Left lung (tissue), 14 donors: ENCODE measurements at regions of chr5 and their contacts with region 1.

Region 1: DNA sequence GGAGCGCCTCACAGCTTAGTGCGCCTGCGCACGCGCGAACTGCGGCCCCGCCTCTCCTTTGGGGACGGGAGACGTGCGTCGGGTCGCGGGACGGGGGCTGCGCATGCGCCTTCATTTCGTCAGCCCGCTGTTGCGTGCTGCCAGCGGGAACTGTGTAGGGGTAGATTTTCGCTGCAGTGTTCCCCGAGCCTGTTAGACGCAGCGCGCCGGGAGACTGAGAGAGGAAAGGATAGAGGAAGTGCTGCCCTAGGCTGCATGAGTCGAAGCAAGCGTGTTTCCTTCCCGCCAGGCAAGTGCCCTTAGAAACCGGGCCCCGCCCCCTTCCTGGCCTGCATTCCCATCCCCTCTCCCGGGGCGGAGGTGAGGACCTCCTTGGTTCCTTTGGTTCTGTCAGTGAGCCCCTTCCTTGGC is 12.3 kb downstream of the ITGA1 start:
- DNase-seq: peak; percentile 94 to 99 (median 98)
- ATAC-seq: peak; percentile 90
- H3K4me3 ChIP-seq: peak overlapping the region; percentile 56 to 80
- H3K27ac ChIP-seq: peak overlapping the region; percentile 96 to 97
- H3K4me1 ChIP-seq: peaks cover 20 to 67% of the 10 kb centered on the region in 2 donors
- H3K27me3 ChIP-seq: no peaks in the 10 kb centered on the region
- CTCF ChIP-seq: no peak

Region 2: GRCh38 chr5:52632281-52632680 is 167.7 kb before region 1 on chr5:
- intact Hi-C with region 1: no loop called
- DNase-seq: no peak
- ATAC-seq: no peak
- H3K4me3 ChIP-seq: no peak overlapping the region
- H3K27ac ChIP-seq: no peak overlapping the region
- H3K4me1 ChIP-seq: no peaks in the 10 kb centered on the region
- H3K27me3 ChIP-seq: no peaks in the 10 kb centered on the region
- CTCF ChIP-seq: no peak

Region 3: DNA sequence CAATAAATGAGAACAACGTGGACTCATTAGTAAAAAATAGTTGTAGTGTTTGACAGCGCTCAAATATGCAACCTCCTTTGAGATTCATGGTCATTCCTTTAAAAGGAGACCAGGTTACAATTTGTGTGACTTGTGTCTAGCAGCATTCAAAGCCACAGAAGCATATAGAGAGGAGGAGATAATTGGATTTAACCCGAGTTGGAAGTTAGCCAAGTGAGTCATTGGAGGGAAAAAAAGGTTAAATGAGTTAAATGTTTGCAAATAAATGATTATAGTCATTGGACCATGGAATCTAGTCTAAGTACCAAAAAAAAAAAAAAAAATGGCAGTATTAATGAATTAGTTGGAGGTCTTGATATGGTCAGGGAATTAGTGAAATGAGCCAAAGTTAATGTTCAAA is 78.7 kb after region 1 on chr5:
- intact Hi-C with region 1: no loop called
- DNase-seq: no peak
- ATAC-seq: no peak
- H3K4me3 ChIP-seq: no peak overlapping the region
- H3K27ac ChIP-seq: no peak overlapping the region
- H3K4me1 ChIP-seq: no peaks in the 10 kb centered on the region
- H3K27me3 ChIP-seq: no peaks in the 10 kb centered on the region
- CTCF ChIP-seq: no peak

Region 4: DNA sequence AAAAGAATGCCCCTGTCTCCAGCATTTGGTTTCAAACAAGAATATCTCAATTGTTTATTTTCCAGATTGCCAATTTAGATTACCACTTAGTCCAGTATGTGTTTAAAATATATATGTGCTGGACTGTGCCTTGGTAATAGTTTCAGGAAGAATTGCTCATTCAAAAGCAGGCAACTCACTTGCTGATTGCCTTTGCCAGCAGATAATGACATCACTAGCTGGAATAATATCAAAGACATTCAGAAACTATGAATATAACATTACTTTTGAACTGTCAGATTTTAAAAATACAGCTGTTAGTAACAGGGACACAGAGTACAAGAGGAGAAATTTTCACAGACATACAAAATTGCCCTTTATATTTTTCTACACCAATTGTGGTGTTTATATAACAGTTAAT is 93.1 kb after region 1 on chr5:
- intact Hi-C with region 1: loop called in 1 of 2 experiments (anchors 10 kb)
- DNase-seq: peak in 2 of 4 donors; percentile 80 to 82
- ATAC-seq: peak; percentile 72
- H3K4me3 ChIP-seq: no peak overlapping the region
- H3K27ac ChIP-seq: peak overlapping the region in 1 of 2 donors; percentile 60
- H3K4me1 ChIP-seq: peaks cover 6 to 21% of the 10 kb centered on the region in 2 donors
- H3K27me3 ChIP-seq: no peaks in the 10 kb centered on the region
- CTCF ChIP-seq: no peak